AG04450 (cell line): ENCODE measurements at regions of chr13 and their contacts with region 1.

Region 1: DNA sequence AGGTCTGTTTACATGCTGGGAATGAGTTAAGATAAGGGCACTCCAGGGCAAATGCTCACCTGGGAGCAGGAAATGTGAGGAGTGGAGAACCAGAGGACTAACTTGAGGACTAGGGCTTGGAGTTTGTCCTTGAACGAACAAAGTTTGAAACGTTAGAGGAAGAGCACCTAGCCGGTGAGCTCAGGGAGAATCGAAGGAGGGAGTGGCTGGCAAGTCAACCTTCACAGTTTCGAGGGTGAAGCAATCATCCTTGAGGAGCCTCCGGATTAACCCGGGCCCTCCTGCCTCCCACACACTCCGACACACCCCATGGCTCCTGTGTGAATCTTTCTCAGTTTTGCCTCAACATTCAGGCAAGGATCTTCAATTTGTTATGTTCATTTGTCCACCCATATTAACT is 58.6 kb downstream of the LMO7 start:
- DNase-seq: no peak
- H3K4me3 ChIP-seq: no peak overlapping the region
- H3K27ac ChIP-seq: no peak overlapping the region
- H3K27me3 ChIP-seq: no peaks in the 10 kb centered on the region
- CTCF ChIP-seq: no peak

Region 2: GRCh38 chr13:75173457-75174356 is 521.0 kb before region 1 on chr13:
- CTCF ChIA-PET with region 1: no interaction called
- POLR2A ChIA-PET with region 1: no interaction called
- DNase-seq: no peak
- H3K4me3 ChIP-seq: no peak overlapping the region
- H3K27ac ChIP-seq: no peak overlapping the region
- H3K27me3 ChIP-seq: no peaks in the 10 kb centered on the region
- CTCF ChIP-seq: no peak

Region 3: DNA sequence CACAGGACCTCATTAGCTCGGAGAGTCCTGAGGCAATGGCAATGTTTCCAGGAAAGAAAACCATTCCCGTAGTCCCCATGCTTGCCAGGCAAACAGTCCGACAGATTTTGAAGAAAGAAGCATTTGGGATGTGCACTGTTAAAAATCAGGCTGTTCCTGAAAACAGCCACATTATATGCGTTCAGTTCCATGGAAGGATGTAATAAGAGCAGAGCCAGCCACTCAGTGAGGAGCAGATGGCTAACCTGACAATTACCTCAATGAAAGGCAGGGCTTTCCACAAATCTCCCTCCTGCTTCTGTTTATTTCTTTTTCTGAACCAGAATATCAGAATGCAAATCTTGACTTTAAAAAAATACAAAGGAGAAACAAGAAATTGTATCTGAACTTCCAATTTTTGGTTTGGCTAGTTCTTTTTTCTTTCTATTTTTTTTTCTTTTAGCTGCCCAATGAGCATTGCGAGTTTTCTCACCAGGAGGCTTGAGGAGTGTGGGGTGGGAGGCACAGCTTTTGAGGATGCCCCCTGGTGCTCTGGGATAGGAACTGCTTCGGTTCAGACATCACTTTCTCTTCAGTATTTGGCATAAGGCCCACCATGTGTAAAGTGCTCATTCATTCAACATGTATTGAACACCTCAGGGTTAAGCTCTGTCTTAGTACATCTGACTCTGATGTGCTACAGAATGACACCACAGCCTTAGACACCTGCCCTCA is 337.0 kb before region 1 on chr13:
- CTCF ChIA-PET with region 1: no interaction called
- POLR2A ChIA-PET with region 1: no interaction called
- DNase-seq: no peak
- H3K4me3 ChIP-seq: no peak overlapping the region
- H3K27ac ChIP-seq: no peak overlapping the region
- H3K27me3 ChIP-seq: no peaks in the 10 kb centered on the region
- CTCF ChIP-seq: peak; percentile 66

Region 4: DNA sequence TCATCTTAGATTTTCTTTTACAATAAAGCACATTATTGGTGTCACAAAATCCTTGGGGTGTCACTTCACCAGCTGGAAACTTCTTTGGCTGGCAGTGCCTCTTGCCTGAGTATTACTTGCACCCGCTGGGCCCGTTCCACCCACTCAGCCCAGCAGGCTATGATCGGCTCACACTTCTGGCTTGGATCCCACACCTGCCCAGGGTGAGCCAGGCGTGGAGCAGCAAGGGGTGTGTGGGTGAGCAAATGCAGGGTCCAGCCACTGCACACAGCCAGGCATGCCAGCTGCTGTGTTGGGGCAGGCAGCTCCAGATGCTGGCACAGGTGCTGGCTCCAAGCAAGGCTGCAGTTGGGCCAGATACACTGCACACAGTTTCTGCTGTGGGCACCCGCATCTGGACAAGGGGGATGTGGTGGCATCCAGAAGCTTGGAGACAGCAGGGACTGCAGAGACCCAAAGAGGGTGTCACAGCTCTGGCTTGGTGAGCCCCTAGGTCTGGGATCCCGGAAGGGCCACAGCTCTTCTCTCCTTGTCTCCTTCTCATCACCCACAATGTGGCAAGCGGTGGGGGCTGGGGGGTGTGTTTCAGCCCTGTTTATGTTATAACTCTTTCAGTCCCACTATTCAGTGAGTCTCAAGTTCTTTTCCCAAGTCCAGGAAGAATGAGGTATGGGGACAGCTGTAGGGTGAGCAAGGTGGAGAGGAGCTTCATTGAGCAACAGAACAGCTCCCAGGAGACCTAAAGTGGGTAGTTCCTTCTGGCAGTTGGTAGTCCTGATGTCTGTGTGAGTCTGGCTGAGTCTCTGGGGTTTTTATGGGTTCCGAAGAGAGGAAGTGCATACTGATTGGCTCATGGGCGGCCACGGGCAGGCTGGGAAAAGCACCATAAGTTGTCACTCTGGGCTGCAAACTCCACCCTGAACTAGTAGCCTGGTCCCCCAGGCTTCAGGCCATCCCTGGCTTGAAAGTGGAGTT is 187.4 kb before region 1 on chr13:
- CTCF ChIA-PET with region 1: no interaction called
- POLR2A ChIA-PET with region 1: no interaction called
- DNase-seq: no peak
- H3K4me3 ChIP-seq: no peak overlapping the region
- H3K27ac ChIP-seq: no peak overlapping the region
- H3K27me3 ChIP-seq: no peaks in the 10 kb centered on the region
- CTCF ChIP-seq: no peak

Region 5: DNA sequence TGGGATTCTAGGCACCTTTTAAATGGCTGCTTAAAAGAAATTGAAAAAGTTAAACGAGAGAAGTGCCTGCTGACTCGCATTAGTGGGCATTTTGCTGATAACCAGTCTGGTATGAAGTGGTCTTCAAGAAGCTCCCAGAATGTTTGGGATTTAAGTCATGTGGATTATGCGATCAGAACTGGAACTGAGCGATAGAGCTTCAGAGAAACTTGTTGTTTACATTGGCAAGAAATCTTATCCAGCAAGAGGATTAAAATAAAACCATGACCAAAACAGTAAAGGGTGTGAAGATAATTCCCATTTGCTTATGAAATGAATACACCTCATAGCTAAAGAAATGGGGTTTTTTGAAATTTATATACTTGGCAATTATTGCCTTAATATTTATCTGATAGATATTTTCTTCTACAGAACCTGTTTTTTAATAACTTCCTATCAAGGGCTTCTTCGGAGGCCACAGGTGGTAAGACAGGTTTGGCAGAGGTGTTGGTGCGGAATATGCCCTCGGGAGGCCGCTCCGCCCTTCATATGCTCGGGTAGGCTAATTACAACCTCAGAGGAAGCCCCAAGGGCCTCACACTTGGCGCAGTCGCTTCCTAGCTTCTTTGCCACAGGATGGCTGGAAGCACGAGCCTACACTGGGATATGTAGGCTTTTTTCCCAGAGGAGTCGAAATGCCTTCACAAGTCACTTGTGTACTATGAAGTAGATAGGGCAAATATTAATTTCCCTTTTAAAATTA is 10.0 kb after region 1 on chr13:
- CTCF ChIA-PET with region 1: interaction called, 68 read pairs
- POLR2A ChIA-PET with region 1: no interaction called
- DNase-seq: peak; percentile 48
- H3K4me3 ChIP-seq: no peak overlapping the region
- H3K27ac ChIP-seq: no peak overlapping the region
- H3K27me3 ChIP-seq: no peaks in the 10 kb centered on the region
- CTCF ChIP-seq: no peak

Region 6: DNA sequence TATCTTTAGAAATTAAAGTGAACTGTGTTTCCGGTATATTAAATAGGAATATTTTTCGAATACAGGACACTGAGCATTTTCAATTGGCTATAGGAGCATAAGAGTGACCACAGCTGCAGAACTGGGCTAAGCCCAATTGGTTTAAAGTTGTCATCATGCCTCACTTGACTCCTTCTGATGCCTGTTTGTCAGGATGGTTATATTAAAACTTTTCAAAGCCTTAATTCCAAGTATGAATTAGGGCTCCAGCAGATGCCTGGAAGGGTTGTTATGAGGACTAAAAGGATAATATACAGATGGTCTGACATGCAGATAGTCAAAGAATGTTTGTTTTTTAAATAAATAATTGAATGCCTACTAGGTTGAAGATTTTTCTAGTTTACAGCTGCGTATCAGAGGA is 41.5 kb after region 1 on chr13:
- CTCF ChIA-PET with region 1: interaction called, 17 read pairs
- POLR2A ChIA-PET with region 1: interaction called, 4 read pairs
- DNase-seq: no peak
- H3K4me3 ChIP-seq: no peak overlapping the region
- H3K27ac ChIP-seq: no peak overlapping the region
- H3K27me3 ChIP-seq: no peaks in the 10 kb centered on the region
- CTCF ChIP-seq: no peak

Region 7: GRCh38 chr13:75792526-75793187 is 97.9 kb after region 1 on chr13:
- CTCF ChIA-PET with region 1: interaction called, 14 read pairs
- POLR2A ChIA-PET with region 1: interaction called, 3 read pairs
- DNase-seq: peak; percentile 26
- H3K4me3 ChIP-seq: no peak overlapping the region
- H3K27ac ChIP-seq: no peak overlapping the region
- H3K27me3 ChIP-seq: no peaks in the 10 kb centered on the region
- CTCF ChIP-seq: no peak

Region 8: GRCh38 chr13:75850916-75851315 is 156.2 kb after region 1 on chr13:
- CTCF ChIA-PET with region 1: interaction called, 19 read pairs
- POLR2A ChIA-PET with region 1: no interaction called
- DNase-seq: no peak
- H3K4me3 ChIP-seq: no peak overlapping the region
- H3K27ac ChIP-seq: no peak overlapping the region
- H3K27me3 ChIP-seq: no peaks in the 10 kb centered on the region
- CTCF ChIP-seq: no peak

Region 9: GRCh38 chr13:75870397-75870903 is 175.7 kb after region 1 on chr13:
- CTCF ChIA-PET with region 1: interaction called, 105 read pairs
- POLR2A ChIA-PET with region 1: no interaction called
- DNase-seq: no peak
- H3K4me3 ChIP-seq: peak overlapping the region; percentile 47
- H3K27ac ChIP-seq: no peak overlapping the region
- H3K27me3 ChIP-seq: no peaks in the 10 kb centered on the region
- CTCF ChIP-seq: peak; percentile 79

Region 10: DNA sequence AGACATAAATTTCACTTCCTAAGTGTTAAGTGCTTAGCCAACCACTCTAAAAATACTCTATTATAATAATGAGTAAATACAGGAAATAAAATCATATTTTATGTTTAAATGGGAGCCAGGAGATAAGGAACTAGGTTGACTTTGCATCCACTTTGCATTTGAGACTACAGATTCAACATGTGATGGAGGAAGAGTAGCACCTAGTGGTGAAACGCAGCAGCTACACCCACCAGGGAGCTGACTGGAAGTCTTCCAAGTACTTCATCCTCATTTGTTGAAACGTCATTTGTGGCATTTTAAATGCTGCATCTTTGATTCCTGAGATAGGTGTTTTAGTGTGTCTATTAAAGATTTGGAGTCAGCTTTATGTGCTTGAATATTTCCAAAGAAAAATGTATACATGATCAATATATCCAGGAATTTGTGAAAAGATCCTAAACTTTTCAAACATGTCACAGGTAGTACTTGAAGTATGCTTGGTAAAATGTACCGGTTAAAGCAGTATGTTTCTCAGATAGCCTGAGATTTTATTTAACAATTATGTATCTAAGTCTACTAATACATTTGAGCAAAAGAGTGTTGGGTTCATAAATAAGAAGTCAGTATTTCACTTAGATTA is 1208.9 kb after region 1 on chr13:
- CTCF ChIA-PET with region 1: interaction called, 13 read pairs
- POLR2A ChIA-PET with region 1: no interaction called
- DNase-seq: peak; percentile 50
- H3K4me3 ChIP-seq: no peak overlapping the region
- H3K27ac ChIP-seq: no peak overlapping the region
- H3K27me3 ChIP-seq: peaks cover 23% of the 10 kb centered on the region
- CTCF ChIP-seq: peak; percentile 100